ENCODE measurements at regions of chr2 and their contacts with region 1.

Region 1: GRCh38 chr2:50820176-50820575 is 211.8 kb downstream of the NRXN1 start:
- DNase-seq: no peak

Region 2: DNA sequence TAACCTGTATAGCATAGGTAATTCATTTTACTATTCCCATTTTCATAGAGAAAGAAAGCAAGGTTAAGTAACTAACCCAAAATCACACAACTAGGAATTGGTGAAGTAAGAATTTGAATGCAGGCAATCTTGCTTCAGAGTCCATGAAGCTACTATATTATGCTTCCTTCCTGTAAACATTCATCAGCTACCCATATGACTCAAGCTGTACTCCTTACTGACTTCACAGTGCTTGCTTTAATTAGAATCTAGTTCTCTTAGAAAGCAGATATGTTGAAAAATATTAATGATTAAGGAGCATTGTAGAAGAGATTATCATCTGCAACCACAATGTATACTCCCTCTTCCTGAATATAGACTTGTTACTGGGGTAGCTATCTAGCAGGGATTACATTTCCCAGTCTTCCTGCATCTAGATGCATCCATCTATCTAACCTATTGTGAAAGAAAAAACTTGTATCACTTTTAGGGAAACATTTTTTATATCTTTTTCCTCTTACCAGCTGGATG is 1985.8 kb after region 1 on chr2:
- intact Hi-C with region 1: loop called in 1 of 2 experiments (anchors 5 kb)
- DNase-seq: no peak

Measured in posterior vena cava (tissue), 2 donors.